Caco-2 (cell line): ENCODE measurements at regions of chr4 and their contacts with region 1.

Region 1: GRCh38 chr4:99028187-99028586 is 32.7 kb downstream of the METAP1 start:
- DNase-seq: no peak
- H3K4me3 ChIP-seq: no peak overlapping the region; the same call in 1 of the 2 replicates
- H3K4me3 Mint-ChIP-seq: peak overlapping the region; percentile 53
- H3K27ac Mint-ChIP-seq: peak overlapping the region; percentile 99
- H3K4me1 ChIP-seq: peaks cover 59% of the 10 kb centered on the region
- H3K4me1 Mint-ChIP-seq: peaks cover 36% of the 10 kb centered on the region
- H3K27me3 ChIP-seq: no peaks in the 10 kb centered on the region
- H3K27me3 Mint-ChIP-seq: no peaks in the 10 kb centered on the region
- CTCF ChIP-seq: no peak

Region 2: GRCh38 chr4:98452091-98452490 is 576.1 kb before region 1 on chr4:
- CTCF ChIA-PET with region 1: no interaction called
- POLR2A ChIA-PET with region 1: no interaction called
- intact Hi-C with region 1: no loop called
- DNase-seq: no peak
- H3K4me3 ChIP-seq: no peak overlapping the region
- H3K4me3 Mint-ChIP-seq: no peak overlapping the region
- H3K27ac Mint-ChIP-seq: no peak overlapping the region
- H3K4me1 ChIP-seq: peaks cover 12% of the 10 kb centered on the region
- H3K4me1 Mint-ChIP-seq: no peaks in the 10 kb centered on the region
- H3K27me3 ChIP-seq: no peaks in the 10 kb centered on the region
- H3K27me3 Mint-ChIP-seq: no peaks in the 10 kb centered on the region
- CTCF ChIP-seq: no peak

Region 3: DNA sequence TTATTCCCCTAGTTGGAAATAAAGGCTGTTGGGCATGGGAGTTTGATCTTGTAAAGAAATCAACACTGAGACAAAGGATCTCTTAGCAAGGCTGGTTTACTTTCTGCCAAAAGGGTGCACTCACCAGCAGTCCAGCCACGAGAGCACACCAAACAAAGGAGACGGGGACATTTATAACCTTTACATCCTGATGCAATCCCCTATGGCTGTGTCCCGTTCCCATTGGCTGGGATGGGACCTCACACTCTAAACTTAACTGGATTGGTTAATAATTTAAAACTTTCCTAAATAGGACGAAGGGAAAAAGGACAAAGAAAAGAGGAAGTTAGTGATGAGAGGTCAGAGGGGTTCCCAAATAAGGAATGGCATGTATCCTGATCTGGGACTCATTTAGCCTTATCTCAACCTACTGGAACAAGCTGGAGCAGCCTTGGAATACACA is 14.8 kb before region 1 on chr4:
- CTCF ChIA-PET with region 1: no interaction called
- POLR2A ChIA-PET with region 1: interaction called, 3 read pairs
- intact Hi-C with region 1: loop called (anchors 1 kb)
- DNase-seq: peak; percentile 52 to 68
- H3K4me3 ChIP-seq: no peak overlapping the region
- H3K4me3 Mint-ChIP-seq: peak overlapping the region; percentile 30
- H3K27ac Mint-ChIP-seq: no peak overlapping the region
- H3K4me1 ChIP-seq: peaks cover 15% of the 10 kb centered on the region
- H3K4me1 Mint-ChIP-seq: peaks cover 15% of the 10 kb centered on the region
- H3K27me3 ChIP-seq: no peaks in the 10 kb centered on the region
- H3K27me3 Mint-ChIP-seq: no peaks in the 10 kb centered on the region
- CTCF ChIP-seq: no peak

Region 4: DNA sequence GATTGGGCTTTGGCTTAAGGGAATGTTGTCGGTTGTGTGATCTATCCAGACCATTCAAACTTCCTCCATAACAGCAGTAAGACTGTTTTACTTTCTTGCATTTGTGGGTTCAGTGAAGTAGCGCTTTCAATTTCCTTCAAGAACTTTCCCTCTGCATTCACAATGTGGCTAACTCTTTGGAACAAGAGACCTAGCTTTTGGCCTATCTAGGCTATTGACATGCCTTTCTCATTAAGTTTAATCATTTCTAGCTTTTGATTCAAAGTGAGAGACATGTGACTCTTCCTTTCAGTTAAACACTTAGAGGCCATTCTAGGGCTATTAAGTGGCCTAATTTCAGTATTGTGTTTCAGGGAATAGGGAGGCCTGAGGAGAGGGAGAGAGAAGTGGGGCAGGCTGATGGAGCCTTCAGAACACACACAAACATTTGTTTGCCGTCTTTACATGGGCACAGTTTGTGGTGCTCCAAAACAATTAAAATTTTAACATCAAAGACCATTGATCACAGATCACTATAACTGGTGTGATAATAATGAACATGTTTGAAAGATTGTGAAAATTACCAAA is 26.3 kb after region 1 on chr4:
- CTCF ChIA-PET with region 1: interaction called, 11 read pairs
- POLR2A ChIA-PET with region 1: no interaction called
- intact Hi-C with region 1: loop called (anchors 1 kb)
- DNase-seq: no peak
- H3K4me3 ChIP-seq: no peak overlapping the region
- H3K4me3 Mint-ChIP-seq: no peak overlapping the region
- H3K27ac Mint-ChIP-seq: peak overlapping the region; percentile 69
- H3K4me1 ChIP-seq: peaks cover 6% of the 10 kb centered on the region; the same call in 1 of the 2 replicates
- H3K4me1 Mint-ChIP-seq: peaks cover 8% of the 10 kb centered on the region
- H3K27me3 ChIP-seq: no peaks in the 10 kb centered on the region
- H3K27me3 Mint-ChIP-seq: no peaks in the 10 kb centered on the region
- CTCF ChIP-seq: no peak

Region 5: GRCh38 chr4:99061048-99061700 is 33.0 kb after region 1 on chr4:
- CTCF ChIA-PET with region 1: interaction called, 11 read pairs
- POLR2A ChIA-PET with region 1: no interaction called
- intact Hi-C with region 1: loop called (anchors 1 kb)
- DNase-seq: peak in 1 of 2 experiments; percentile 10
- H3K4me3 ChIP-seq: no peak overlapping the region
- H3K4me3 Mint-ChIP-seq: no peak overlapping the region
- H3K27ac Mint-ChIP-seq: no peak overlapping the region
- H3K4me1 ChIP-seq: 0 out of 2 replicates have a peak, but pooled peaks cover 3% of the 10 kb centered on the region
- H3K4me1 Mint-ChIP-seq: peaks cover 17% of the 10 kb centered on the region
- H3K27me3 ChIP-seq: no peaks in the 10 kb centered on the region
- H3K27me3 Mint-ChIP-seq: no peaks in the 10 kb centered on the region
- CTCF ChIP-seq: no peak

Region 6: GRCh38 chr4:99088481-99089365 is 60.5 kb after region 1 on chr4 and contains the start of gene ADH5:
- CTCF ChIA-PET with region 1: no interaction called
- POLR2A ChIA-PET with region 1: no interaction called
- intact Hi-C with region 1: no loop called
- DNase-seq: peak; percentile 80 to 85
- H3K4me3 ChIP-seq: peak within 1 kb of the TSS; percentile 83
- H3K4me3 Mint-ChIP-seq: peak within 1 kb of the TSS; percentile 98
- H3K27ac Mint-ChIP-seq: peak within 1 kb of the TSS; percentile 98
- H3K4me1 ChIP-seq: peaks cover 13% of the 10 kb centered on the region
- H3K4me1 Mint-ChIP-seq: peaks cover 29% of the 10 kb centered on the region
- H3K27me3 ChIP-seq: no peaks in the 10 kb centered on the region
- H3K27me3 Mint-ChIP-seq: no peaks in the 10 kb centered on the region
- CTCF ChIP-seq: no peak
- total RNA-seq, gene ADH5: 144 and 161 TPM in 2 replicates

Region 7: GRCh38 chr4:99383833-99384392 is 355.7 kb after region 1 on chr4:
- CTCF ChIA-PET with region 1: no interaction called
- POLR2A ChIA-PET with region 1: no interaction called
- intact Hi-C with region 1: no loop called
- DNase-seq: no peak
- H3K4me3 ChIP-seq: no peak overlapping the region
- H3K4me3 Mint-ChIP-seq: no peak overlapping the region
- H3K27ac Mint-ChIP-seq: no peak overlapping the region
- H3K4me1 ChIP-seq: peaks cover 10% of the 10 kb centered on the region; the same call in 1 of the 2 replicates
- H3K4me1 Mint-ChIP-seq: peaks cover 7% of the 10 kb centered on the region
- H3K27me3 ChIP-seq: no peaks in the 10 kb centered on the region; the same call in 1 of the 2 replicates
- H3K27me3 Mint-ChIP-seq: no peaks in the 10 kb centered on the region
- CTCF ChIP-seq: no peak